Ascending aorta (tissue), 2 donors: ENCODE measurements at regions of chr1 and their contacts with region 1.

Region 1: GRCh38 chr1:158998781-158999161 is 10.9 kb upstream of the IFI16 start:
- DNase-seq: no peak
- H3K4me3 ChIP-seq: peak overlapping the region; percentile 44 to 64
- H3K27ac ChIP-seq: peak overlapping the region; percentile 72 to 83
- H3K4me1 ChIP-seq: no peaks in the 10 kb centered on the region
- H3K27me3 ChIP-seq: no peaks in the 10 kb centered on the region
- CTCF ChIP-seq: peak; percentile 78 to 88 (median 88)

Region 2: GRCh38 chr1:157969697-157970485 is 1028.9 kb before region 1 on chr1:
- intact Hi-C with region 1: loop called (anchors 5 kb)
- DNase-seq: peak in 1 of 2 donors; percentile 82
- H3K4me3 ChIP-seq: no peak overlapping the region
- H3K27ac ChIP-seq: peak overlapping the region; percentile 32 to 55
- H3K4me1 ChIP-seq: peaks cover 11 to 12% of the 10 kb centered on the region in 2 donors
- H3K27me3 ChIP-seq: no peaks in the 10 kb centered on the region
- CTCF ChIP-seq: peak; percentile 55 to 78 (median 65)

Region 3: GRCh38 chr1:158203693-158204457 is 794.9 kb before region 1 on chr1:
- intact Hi-C with region 1: loop called (anchors 2 kb)
- DNase-seq: no peak
- H3K4me3 ChIP-seq: no peak overlapping the region
- H3K27ac ChIP-seq: no peak overlapping the region
- H3K4me1 ChIP-seq: no peaks in the 10 kb centered on the region
- H3K27me3 ChIP-seq: no peaks in the 10 kb centered on the region
- CTCF ChIP-seq: peak; percentile 55 to 73 (median 64)

Region 4: DNA sequence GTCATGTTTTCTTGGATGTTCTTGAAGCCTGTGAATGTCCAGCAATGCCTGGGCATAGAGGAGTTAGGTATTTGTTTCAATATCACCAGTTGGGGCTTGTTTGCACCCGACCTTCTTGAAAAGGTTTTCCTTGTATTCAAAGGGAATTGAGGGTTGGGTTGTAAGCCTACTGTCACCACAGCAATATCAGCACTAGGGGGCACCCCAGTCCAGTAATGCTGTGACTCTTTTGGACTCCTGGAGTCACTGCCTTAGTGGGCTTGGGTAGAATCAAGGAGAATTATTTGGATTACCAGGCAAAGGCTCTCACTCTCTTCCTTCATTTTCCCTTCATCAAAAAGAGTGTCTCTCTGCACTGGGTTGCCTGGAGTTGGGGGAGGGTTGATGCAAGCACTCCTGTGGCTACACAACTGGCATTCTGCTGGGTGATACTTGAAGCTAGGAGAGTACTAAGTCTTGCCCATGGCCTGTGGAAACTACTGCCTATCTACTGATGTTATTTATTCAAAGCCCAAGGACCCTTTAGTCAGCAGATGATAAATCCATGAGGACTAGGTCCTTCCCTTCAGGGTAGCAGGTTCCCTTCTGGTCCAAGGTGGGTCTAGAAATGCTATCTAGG is 492.3 kb before region 1 on chr1:
- intact Hi-C with region 1: loop called (anchors 5 kb)
- DNase-seq: no peak
- H3K4me3 ChIP-seq: no peak overlapping the region
- H3K27ac ChIP-seq: no peak overlapping the region
- H3K4me1 ChIP-seq: peaks cover 0 to 3% of the 10 kb centered on the region in 2 donors
- H3K27me3 ChIP-seq: no peaks in the 10 kb centered on the region
- CTCF ChIP-seq: peak in 2 of 3 experiments; percentile 7 to 16

Region 5: GRCh38 chr1:159009704-159010361 is 11.1 kb after region 1 on chr1 and contains the start of gene IFI16:
- intact Hi-C with region 1: loop called (anchors 1 kb)
- DNase-seq: peak in 1 of 2 donors; percentile 84
- H3K4me3 ChIP-seq: peak within 1 kb of the TSS; percentile 62 to 66
- H3K27ac ChIP-seq: peak within 1 kb of the TSS; percentile 68 to 78
- H3K4me1 ChIP-seq: peaks cover 0 to 2% of the 10 kb centered on the region in 2 donors
- H3K27me3 ChIP-seq: no peaks in the 10 kb centered on the region
- CTCF ChIP-seq: no peak
- total RNA-seq, gene IFI16: 61.2 TPM